Dendritic cell treated with granulocyte-macrophage colony-stimulating factor and Interleukin-4, amounts not matched to agents 40 ng/mL and 50 ng/mL, for 4 days (primary cell): ENCODE measurements at regions of chr5 and their contacts with region 1.

Region 1: DNA sequence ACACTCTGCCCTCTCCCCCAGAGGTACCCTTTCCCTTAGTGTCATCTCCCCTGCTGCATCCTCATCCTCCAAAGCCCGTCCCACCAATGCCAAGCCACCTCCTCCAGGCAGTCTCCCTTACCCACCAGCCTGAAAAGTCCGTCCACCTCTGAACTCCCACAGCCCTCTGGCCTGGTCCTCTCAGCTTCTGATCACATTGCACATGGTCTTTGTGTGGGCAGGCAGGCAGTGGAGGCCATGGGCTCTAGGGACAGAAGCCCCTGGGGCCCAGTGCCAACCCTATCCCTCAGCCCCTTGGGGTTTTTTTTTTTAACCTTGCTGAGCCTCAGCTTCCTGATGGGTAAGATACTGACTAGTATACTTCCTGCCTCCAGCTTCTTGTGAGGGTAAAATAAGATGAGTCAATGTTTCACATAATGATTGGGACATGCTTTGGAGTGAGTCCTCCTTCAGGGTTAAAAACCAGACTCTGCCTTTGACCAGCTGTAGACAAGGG is 19.4 kb downstream of the CSF1R start:
- H3K4me3 Mint-ChIP-seq: peak overlapping the region; percentile 4
- H3K27ac Mint-ChIP-seq: peak overlapping the region; percentile 98
- H3K4me1 Mint-ChIP-seq: peaks cover 88% of the 10 kb centered on the region
- H3K27me3 Mint-ChIP-seq: no peaks in the 10 kb centered on the region

Region 2: DNA sequence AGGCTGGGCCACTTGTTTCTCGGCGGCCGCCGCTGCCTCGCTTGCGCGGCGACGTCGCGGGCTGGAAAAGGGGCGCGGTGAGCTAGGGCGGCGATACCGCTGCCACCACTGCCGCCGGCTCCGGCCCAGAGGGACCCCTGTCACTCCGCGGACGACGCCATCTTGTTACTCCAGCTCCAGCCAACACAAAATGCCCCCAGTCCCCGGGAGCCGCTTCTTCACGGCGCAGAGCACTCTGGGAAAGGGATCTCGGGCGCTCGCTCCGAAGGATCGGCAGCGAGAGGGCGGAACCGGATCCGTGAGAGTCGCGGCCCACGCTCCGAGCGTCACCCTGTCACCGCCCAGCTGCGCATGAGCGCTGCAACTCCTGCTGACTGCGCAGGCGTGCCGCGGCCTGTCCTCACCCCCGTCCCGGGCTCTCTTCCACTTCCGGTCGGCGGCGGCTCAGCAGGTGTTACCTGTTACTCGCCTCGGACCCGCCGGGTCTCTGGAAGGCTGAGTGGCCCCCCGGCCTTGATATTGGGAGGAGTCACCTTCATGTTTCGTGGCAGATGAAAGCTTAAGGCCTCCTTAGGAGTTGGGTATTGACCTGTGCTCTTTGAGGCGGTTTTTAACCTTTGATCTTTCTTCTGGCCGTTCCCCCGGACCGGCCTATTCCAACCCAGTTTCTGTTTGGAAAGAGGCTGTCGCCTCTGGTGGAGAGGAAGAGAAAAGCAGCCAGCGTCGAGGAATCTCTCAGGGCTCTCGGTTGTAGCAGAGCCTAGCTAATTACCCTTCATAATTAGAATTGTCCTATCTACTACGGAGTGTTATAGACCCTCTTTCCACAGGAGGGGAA is 515.5 kb before region 1 on chr5 and contains the start of gene CSNK1A1:
- intact Hi-C with region 1: no loop called
- H3K4me3 Mint-ChIP-seq: peak within 1 kb of the TSS; percentile 94
- H3K27ac Mint-ChIP-seq: peak within 1 kb of the TSS; percentile 99
- H3K4me1 Mint-ChIP-seq: peaks cover 31% of the 10 kb centered on the region
- H3K27me3 Mint-ChIP-seq: no peaks in the 10 kb centered on the region

Region 3: GRCh38 chr5:150000256-150000989 is 66.5 kb before region 1 on chr5 and contains the starts of genes HMGXB3 and TIGD6:
- intact Hi-C with region 1: loop called (anchors 2 kb)
- H3K4me3 Mint-ChIP-seq: peak within 1 kb of the TSS; percentile 93
- H3K27ac Mint-ChIP-seq: peak within 1 kb of the TSS; percentile 96
- H3K4me1 Mint-ChIP-seq: peaks cover 68% of the 10 kb centered on the region
- H3K27me3 Mint-ChIP-seq: no peaks in the 10 kb centered on the region

Region 4: GRCh38 chr5:150081541-150082283 is 14.8 kb after region 1 on chr5:
- intact Hi-C with region 1: loop called (anchors 1 kb)
- H3K4me3 Mint-ChIP-seq: peak overlapping the region; percentile 98
- H3K27ac Mint-ChIP-seq: no peak overlapping the region
- H3K4me1 Mint-ChIP-seq: peaks cover 15% of the 10 kb centered on the region
- H3K27me3 Mint-ChIP-seq: no peaks in the 10 kb centered on the region